Activated T-helper 2 cell treated with anti-CD3 and anti-CD28 coated beads, Interferon-gamma antibody, Interleukin-2, Interleukin-4, amounts not matched to agents 10 μg/mL and 5 μg/mL and 100 μg/mL, durations not matched to agents 14 hours and 24 hours and 36 hours (primary cell): ENCODE measurements at regions of chr5 and their contacts with region 1.

Region 1: GRCh38 chr5:5141625-5142532 is 1.7 kb downstream of the ADAMTS16 start:
- DNase-seq: no peak
- H3K4me3 Mint-ChIP-seq: no peak overlapping the region
- H3K27ac Mint-ChIP-seq: no peak overlapping the region
- H3K4me1 Mint-ChIP-seq: no peaks in the 10 kb centered on the region
- H3K27me3 Mint-ChIP-seq: peaks cover 17% of the 10 kb centered on the region

Region 2: GRCh38 chr5:3602785-3603502 is 1538.9 kb before region 1 on chr5:
- intact Hi-C with region 1: loop called (anchors 10 kb)
- DNase-seq: no peak
- H3K4me3 Mint-ChIP-seq: no peak overlapping the region
- H3K27ac Mint-ChIP-seq: no peak overlapping the region
- H3K4me1 Mint-ChIP-seq: no peaks in the 10 kb centered on the region
- H3K27me3 Mint-ChIP-seq: peaks cover 64% of the 10 kb centered on the region